Esophagus muscularis mucosa (tissue), 4 donors: ENCODE measurements at regions of chr17 and their contacts with region 1.

Region 1: DNA sequence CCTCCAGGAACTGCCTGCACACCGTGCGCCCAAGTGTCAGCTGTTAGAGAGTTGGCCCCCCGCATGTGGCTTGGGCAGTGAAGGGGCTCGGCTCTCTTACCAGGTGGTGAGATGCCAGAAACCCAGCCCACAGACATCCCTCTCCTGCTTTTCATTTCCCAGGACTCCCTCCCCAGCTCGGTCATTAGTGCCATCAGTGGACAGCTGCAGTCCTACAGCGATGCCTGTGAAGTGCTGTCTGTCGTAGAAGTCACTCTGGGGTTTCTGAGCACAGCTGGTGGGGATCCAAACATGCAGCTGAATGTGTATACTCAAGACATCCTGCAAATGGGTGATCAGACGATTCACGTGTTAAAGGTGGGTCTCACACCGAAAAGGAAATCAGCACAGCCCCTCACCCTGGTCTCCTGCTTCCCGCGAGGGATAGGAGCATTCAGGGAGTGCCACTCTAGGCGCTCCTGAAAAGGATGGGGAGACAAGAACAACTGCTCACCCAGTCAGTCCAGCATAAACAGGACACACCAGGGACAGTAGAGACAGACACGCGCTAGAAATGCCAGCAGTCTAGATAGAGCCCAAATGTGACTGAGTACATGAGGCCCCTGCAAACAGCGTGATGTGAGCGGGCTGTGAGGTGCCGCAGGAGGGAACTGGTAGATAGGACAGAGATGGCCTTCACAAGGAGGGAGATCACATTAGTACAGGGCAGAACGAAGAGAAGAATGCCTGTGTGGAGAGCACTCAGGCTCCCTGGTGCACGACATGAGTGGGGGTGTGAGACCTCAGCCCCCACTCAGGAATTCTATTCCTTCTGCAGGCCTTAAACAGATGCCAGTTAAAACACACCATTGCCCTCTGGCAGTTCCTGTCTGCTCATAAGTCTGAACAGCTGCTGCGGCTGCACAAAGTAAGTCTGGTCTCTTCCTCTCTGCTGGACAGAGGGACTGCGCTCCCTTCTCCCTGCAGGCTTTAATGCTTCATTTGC is 25.7 kb upstream of the ENDOV start:
- DNase-seq: no peak
- H3K4me3 ChIP-seq: no peak overlapping the region
- H3K27ac ChIP-seq: no peak overlapping the region
- H3K4me1 ChIP-seq: no peaks in the 10 kb centered on the region
- H3K27me3 ChIP-seq: no peaks in the 10 kb centered on the region
- CTCF ChIP-seq: no peak
- EP300 ChIP-seq: no peak
- POLR2A ChIP-seq: no peak

Region 2: GRCh38 chr17:80243526-80244433 is 145.5 kb before region 1 on chr17:
- intact Hi-C with region 1: no loop called
- DNase-seq: no peak
- H3K4me3 ChIP-seq: no peak overlapping the region
- H3K27ac ChIP-seq: no peak overlapping the region
- H3K4me1 ChIP-seq: no peaks in the 10 kb centered on the region
- H3K27me3 ChIP-seq: no peaks in the 10 kb centered on the region
- CTCF ChIP-seq: no peak
- EP300 ChIP-seq: no peak
- POLR2A ChIP-seq: no peak

Region 3: GRCh38 chr17:80267391-80267790 is 121.9 kb before region 1 on chr17:
- intact Hi-C with region 1: no loop called
- DNase-seq: no peak
- H3K4me3 ChIP-seq: no peak overlapping the region
- H3K27ac ChIP-seq: no peak overlapping the region
- H3K4me1 ChIP-seq: peaks cover 20 to 39% (median 27%) of the 10 kb centered on the region in 4 donors
- H3K27me3 ChIP-seq: no peaks in the 10 kb centered on the region
- CTCF ChIP-seq: no peak
- EP300 ChIP-seq: no peak
- POLR2A ChIP-seq: no peak

Region 4: GRCh38 chr17:80279895-80280294 is 109.4 kb before region 1 on chr17:
- intact Hi-C with region 1: loop called (anchors 10 kb)
- DNase-seq: no peak
- H3K4me3 ChIP-seq: no peak overlapping the region
- H3K27ac ChIP-seq: no peak overlapping the region
- H3K4me1 ChIP-seq: peaks cover 26 to 44% (median 36%) of the 10 kb centered on the region in 4 donors
- H3K27me3 ChIP-seq: no peaks in the 10 kb centered on the region
- CTCF ChIP-seq: peak in 2 of 3 experiments; percentile 17 to 31
- EP300 ChIP-seq: no peak
- POLR2A ChIP-seq: no peak

Region 5: DNA sequence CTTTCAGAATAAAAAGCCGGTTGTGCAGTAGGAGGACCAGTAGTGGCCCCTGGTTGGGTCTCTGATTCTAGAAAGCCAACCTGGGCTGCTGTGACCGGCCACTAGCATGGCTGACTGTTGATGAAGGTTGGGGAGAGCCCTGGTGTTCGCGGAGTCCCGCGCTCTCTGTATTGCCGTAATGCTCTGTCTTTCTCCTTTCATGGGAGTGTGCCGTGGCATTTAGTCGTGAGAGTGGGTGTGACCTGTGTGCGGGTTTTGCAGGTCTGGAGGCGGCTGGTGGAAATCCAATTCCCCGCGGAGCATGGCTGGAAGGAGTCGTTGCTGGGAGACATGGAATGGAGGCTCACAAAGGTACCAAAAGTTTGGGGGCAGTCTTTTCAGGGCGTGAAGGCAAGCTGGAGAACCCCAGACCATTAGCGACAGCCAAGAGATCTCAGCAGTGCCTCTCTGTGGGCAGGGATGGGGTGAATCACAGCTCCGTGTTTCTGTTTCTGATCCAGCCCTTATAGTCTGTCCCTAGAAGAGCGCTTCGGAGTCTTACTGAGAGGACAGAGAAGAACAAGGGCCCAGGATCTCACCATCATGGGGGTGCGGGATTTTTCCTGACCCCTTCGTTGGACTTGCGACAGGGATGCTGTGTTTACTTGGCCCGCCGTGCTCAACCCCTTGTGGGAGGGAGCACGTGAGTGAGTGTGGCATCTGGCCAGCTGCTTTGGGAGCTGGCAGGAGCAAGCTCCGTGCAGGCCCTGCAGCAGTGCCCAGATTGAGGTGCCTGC is 72.2 kb before region 1 on chr17:
- intact Hi-C with region 1: no loop called
- DNase-seq: no peak
- H3K4me3 ChIP-seq: no peak overlapping the region
- H3K27ac ChIP-seq: no peak overlapping the region
- H3K4me1 ChIP-seq: peaks cover 0 to 8% (median 2%) of the 10 kb centered on the region in 4 donors
- H3K27me3 ChIP-seq: no peaks in the 10 kb centered on the region
- CTCF ChIP-seq: no peak
- EP300 ChIP-seq: no peak
- POLR2A ChIP-seq: no peak